Activated T-helper 1 cell treated with anti-CD3 and anti-CD28 coated beads, Interleukin-12 subunit alpha, Interleukin-12 subunit beta, Interleukin-2, Interleukin-4 antibody, amounts not matched to agents 30 ng/mL and 10 ng/mL and 1 ng/mL, durations not matched to agents 14 hours and 24 hours and 36 hours (primary cell): ENCODE measurements at regions of chr3 and their contacts with region 1.

Region 1: DNA sequence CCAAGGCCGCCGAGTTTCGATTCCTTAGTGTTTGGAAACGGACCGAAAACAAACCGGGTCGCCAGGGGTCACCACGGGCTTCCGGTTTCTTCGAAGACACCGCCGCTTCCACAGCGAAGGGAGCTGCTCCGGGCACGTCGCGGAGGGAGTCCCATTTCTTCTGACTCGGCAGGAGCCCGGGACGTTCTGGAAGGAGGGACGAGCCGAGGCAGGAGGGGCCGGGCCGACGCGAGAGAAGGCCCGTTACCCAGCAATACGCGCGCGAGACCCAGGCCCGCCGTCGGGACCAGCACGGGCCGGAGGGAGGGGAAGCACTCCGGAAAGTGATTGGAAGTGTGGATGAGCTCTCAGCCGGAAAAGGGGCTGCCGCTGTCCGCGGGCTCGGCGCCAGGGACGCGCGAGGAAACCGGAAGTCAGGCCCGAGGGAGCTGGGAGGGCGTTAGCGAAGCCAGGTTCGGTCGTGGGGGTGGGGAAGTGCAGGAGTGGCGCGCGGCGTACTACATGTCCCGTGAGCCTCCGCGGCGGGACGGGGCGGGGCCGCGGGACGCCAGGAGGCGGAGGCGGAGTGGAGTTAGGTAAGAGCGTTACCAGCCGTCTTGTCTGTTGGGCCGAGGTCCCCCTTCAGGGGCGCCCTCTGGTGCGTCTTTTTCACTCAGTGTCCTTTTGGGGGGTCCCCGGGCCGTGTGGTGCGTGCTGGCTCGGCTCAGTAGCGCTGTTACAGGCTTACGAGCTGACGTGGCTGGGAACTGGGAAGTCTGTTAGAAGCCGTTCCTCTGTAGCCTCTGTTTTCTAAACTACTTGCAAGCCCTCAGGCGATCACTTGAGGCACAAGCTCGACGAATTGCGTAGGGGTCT is at the starts of genes AZI2 and ZCWPW2:
- DNase-seq: peak; percentile 90
- H3K4me3 Mint-ChIP-seq: peak within 1 kb of the TSS; percentile 98
- H3K27ac Mint-ChIP-seq: peak within 1 kb of the TSS; percentile 98
- H3K4me1 Mint-ChIP-seq: peaks cover 66% of the 10 kb centered on the region
- H3K27me3 Mint-ChIP-seq: no peaks in the 10 kb centered on the region
- total RNA-seq, gene AZI2: 43.7 and 44.8 TPM in 2 replicates
- total RNA-seq, gene ZCWPW2: 0.24 TPM in 1 of 2 replicates, not detected in the other

Region 2: GRCh38 chr3:27454914-27455313 is 893.9 kb before region 1 on chr3:
- intact Hi-C with region 1: loop called (anchors 2 kb)
- DNase-seq: no peak
- H3K4me3 Mint-ChIP-seq: peak overlapping the region; percentile 1
- H3K27ac Mint-ChIP-seq: peak overlapping the region; percentile 85
- H3K4me1 Mint-ChIP-seq: peaks cover 33% of the 10 kb centered on the region
- H3K27me3 Mint-ChIP-seq: no peaks in the 10 kb centered on the region

Region 3: GRCh38 chr3:27632431-27633223 is 716.2 kb before region 1 on chr3:
- intact Hi-C with region 1: loop called (anchors 5 kb)
- DNase-seq: peak; percentile 25
- H3K4me3 Mint-ChIP-seq: peak overlapping the region; percentile 86
- H3K27ac Mint-ChIP-seq: peak overlapping the region; percentile 82
- H3K4me1 Mint-ChIP-seq: peaks cover 41% of the 10 kb centered on the region
- H3K27me3 Mint-ChIP-seq: no peaks in the 10 kb centered on the region

Region 4: GRCh38 chr3:28241221-28242160 is 107.4 kb before region 1 on chr3 and contains the start of gene CMC1:
- intact Hi-C with region 1: loop called (anchors 1 kb)
- DNase-seq: peak; percentile 87
- H3K4me3 Mint-ChIP-seq: peak within 1 kb of the TSS; percentile 94
- H3K27ac Mint-ChIP-seq: peak within 1 kb of the TSS; percentile 96
- H3K4me1 Mint-ChIP-seq: peaks cover 37% of the 10 kb centered on the region
- H3K27me3 Mint-ChIP-seq: no peaks in the 10 kb centered on the region
- total RNA-seq, gene CMC1: 29.5 and 32.5 TPM in 2 replicates

Region 5: DNA sequence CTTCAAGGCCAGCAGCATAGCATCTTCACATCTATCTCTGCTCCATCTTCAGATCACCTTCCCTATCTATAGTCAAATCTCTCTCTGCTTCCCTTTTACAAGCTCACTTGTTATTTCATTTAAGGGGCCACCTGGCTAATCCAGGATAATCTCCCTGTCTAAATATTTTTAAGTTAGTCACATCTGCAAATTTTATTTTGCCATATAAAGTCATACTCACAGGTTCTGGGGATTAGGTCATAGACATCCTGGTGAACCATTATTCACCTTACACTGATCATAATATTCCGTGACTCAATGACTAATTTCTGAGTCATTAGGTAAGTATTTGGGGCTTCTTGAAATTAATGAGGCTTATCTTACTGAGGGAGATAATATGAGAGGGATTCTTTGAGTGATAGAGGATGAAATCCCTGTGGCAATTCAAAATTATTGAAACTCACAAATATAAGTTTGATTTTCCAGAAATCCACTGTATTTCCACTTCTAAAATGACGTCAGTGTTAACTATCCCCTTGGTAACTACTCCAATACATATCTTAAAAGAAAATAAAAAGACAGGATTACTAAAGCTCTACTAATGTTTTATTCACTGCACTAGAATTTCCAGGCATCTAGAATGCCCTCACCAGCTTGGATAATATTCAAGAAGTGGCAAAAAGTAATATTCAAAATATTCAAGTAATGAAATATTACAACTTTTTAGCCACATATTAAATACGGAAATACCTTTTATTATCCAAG is 838.3 kb after region 1 on chr3:
- intact Hi-C with region 1: loop called (anchors 10 kb)
- DNase-seq: no peak
- H3K4me3 Mint-ChIP-seq: no peak overlapping the region
- H3K27ac Mint-ChIP-seq: peak overlapping the region; percentile 8
- H3K4me1 Mint-ChIP-seq: peaks cover 36% of the 10 kb centered on the region
- H3K27me3 Mint-ChIP-seq: no peaks in the 10 kb centered on the region